A549 (cell line): ENCODE measurements at regions of chr15 and their contacts with region 1.

Region 1: GRCh38 chr15:74307827-74308644 is 59.4 kb downstream of the CYP11A1 start:
- DNase-seq: peak; percentile 61 to 83
- ATAC-seq: peak; percentile 88 to 94
- H3K4me3 ChIP-seq: no peak overlapping the region
- H3K27ac ChIP-seq: peak overlapping the region in 1 of 2 experiments; percentile 62; a peak in 2 of 6 replicates
- H3K4me1 ChIP-seq: peaks cover 18% of the 10 kb centered on the region
- CTCF ChIP-seq: peak; percentile 67
- EP300 ChIP-seq: no peak
- POLR2A ChIP-seq: no peak
- RAD21 ChIP-seq: peak; percentile 85 to 87

Region 2: DNA sequence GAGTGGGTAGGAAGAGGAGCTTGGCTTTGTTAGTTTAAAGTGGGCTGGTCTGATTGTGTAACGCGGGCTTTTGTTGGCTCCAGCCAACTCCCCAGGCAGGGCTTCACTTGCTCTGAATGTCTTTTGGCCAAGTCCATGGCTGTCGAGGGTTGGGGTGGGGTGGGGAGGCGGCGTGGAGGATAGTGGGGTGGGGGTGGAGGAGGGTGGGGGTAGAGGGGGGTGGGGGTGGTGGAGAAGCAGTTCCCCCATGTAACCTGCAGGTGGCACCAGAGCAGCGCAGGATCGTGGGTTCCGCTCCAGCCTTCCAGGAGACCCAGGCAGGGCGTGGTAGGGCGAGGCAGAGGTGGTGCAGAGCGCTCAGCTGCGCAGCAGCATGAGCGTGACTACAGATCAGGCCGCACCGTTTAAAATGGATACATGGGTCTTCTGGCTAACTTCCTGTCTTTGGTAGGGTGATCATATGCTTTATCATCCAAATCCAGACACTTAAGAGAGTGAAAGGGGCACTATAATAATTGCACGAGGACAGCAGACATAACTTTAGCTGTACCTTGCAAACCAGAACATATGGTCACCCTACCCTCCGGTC is 254.0 kb before region 1 on chr15:
- CTCF ChIA-PET with region 1: interaction called, 63 read pairs
- POLR2A ChIA-PET with region 1: no interaction called
- DNase-seq: peak; percentile 56 to 64
- ATAC-seq: peak; percentile 97
- H3K4me3 ChIP-seq: no peak overlapping the region
- H3K27ac ChIP-seq: peak overlapping the region; percentile 42 to 51; a peak in 2 of 6 replicates
- H3K4me1 ChIP-seq: peaks cover 19% of the 10 kb centered on the region; the same call in 2 of the 3 replicates
- CTCF ChIP-seq: peak; percentile 55
- EP300 ChIP-seq: no peak
- POLR2A ChIP-seq: no peak
- RAD21 ChIP-seq: peak; percentile 60 to 79

Region 3: GRCh38 chr15:74170486-74171226 is 137.4 kb before region 1 on chr15:
- CTCF ChIA-PET with region 1: interaction called, 13 read pairs
- POLR2A ChIA-PET with region 1: interaction called, 3 read pairs
- DNase-seq: no peak
- ATAC-seq: no peak
- H3K4me3 ChIP-seq: no peak overlapping the region
- H3K27ac ChIP-seq: peak overlapping the region in 1 of 2 experiments; percentile 57; a peak in 2 of 6 replicates
- H3K4me1 ChIP-seq: peaks cover 16% of the 10 kb centered on the region
- CTCF ChIP-seq: no peak
- EP300 ChIP-seq: no peak
- POLR2A ChIP-seq: no peak
- RAD21 ChIP-seq: no peak

Region 4: GRCh38 chr15:74202452-74203428 is 105.3 kb before region 1 on chr15 and contains the start of gene STRA6:
- CTCF ChIA-PET with region 1: interaction called, 33 read pairs
- POLR2A ChIA-PET with region 1: no interaction called
- DNase-seq: peak; percentile 75 to 85
- ATAC-seq: peak; percentile 82 to 83
- H3K4me3 ChIP-seq: peak within 1 kb of the TSS; percentile 51
- H3K27ac ChIP-seq: peak within 1 kb of the TSS; percentile 90 to 97
- H3K4me1 ChIP-seq: peaks cover 64% of the 10 kb centered on the region
- CTCF ChIP-seq: no peak
- EP300 ChIP-seq: no peak
- POLR2A ChIP-seq: peak; percentile 5; the same call in 1 of the 2 replicates
- RAD21 ChIP-seq: peak; percentile 37 to 39; a peak in 4 of 5 replicates
- polyA plus RNA-seq, gene STRA6: 35.0 and 49.8 TPM in 2 replicates

Region 5: DNA sequence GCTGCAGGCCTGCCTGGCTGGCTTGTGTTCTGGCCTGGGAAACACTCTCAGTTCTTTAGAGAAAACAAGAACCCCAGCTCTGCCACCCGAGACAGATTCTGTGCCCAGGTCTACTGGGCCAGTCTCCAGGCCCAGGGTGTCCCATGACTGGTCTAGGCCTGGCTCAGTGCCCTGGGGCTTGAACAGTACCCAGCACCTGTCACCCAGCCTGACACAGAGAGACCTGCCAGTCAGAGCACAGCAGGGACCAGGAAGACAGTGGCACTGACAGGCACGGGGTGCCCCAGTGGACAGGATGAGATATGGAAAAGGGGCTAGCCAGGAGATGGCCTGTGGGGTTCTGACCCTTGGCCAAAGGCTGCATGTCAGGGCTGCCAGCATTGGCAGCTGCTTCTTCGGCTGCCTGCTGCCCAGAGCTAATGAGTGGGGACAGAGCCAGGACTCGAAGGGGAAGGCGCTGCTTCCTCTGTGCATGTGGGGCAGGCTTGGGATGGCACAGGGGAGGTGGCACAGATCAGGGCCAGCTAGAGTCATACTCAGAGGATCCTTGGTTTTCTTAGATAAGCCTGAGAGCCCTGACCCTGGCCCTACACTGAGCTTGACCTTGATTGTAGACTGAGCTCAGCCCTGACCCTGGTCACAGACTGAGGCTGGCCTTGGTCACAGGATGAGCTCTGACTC is 56.8 kb before region 1 on chr15:
- CTCF ChIA-PET with region 1: interaction called, 10 read pairs
- POLR2A ChIA-PET with region 1: no interaction called
- DNase-seq: no peak
- ATAC-seq: peak; percentile 33 to 52; a peak in 3 of 6 replicates
- H3K4me3 ChIP-seq: no peak overlapping the region
- H3K27ac ChIP-seq: peak overlapping the region in 1 of 2 experiments; percentile 11; a peak in 1 of 6 replicates
- H3K4me1 ChIP-seq: peaks cover 4% of the 10 kb centered on the region; the same call in 1 of the 3 replicates
- CTCF ChIP-seq: no peak
- EP300 ChIP-seq: no peak
- POLR2A ChIP-seq: no peak
- RAD21 ChIP-seq: no peak

Region 6: DNA sequence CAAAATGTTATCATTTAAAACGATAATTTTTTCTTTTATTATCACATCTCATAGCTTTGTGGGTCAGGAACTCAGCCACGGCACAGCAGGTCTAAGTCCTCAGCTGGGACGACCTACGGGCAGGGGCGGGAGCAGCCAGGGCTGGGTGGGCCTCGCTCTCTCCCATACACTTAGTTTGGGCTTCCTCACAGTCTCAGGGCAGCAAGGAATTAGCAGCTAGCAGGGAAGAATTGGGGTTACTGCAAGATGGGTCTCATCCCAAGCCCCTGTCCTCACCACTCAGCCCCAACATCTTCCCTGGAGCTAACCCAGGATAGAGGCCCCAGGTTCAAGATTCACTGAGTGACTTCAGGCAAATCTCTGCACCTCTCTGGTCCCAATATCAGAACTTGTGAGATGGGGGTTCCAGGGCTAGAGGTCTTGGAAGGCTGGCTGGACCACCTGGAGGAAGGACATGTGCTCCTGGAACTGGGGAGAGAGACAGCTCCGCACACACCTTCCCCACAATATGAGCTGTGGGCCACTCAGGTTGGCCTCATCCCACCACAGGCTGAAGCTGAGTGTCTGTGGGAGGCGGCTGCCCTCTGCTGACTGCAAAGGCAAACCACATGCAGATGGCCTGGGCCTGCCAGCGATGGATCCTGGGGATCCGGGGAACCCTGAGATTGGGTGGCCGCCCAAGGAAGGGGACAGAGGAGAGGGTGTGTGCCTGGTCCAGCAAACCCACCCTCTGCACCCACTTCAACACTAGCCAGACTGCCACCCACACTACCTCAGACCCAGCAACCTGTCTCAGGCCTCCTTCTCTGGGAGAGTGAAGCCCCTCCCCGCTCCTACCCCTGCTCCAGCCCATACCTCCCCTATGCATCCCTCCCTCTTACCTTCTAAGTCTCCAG is 14.4 kb after region 1 on chr15:
- CTCF ChIA-PET with region 1: interaction called, 174 read pairs
- POLR2A ChIA-PET with region 1: no interaction called
- DNase-seq: peak; percentile 55 to 65
- ATAC-seq: peak; percentile 93 to 95
- H3K4me3 ChIP-seq: no peak overlapping the region
- H3K27ac ChIP-seq: no peak overlapping the region
- H3K4me1 ChIP-seq: peaks cover 11% of the 10 kb centered on the region
- CTCF ChIP-seq: peak; percentile 80
- EP300 ChIP-seq: no peak
- POLR2A ChIP-seq: no peak
- RAD21 ChIP-seq: peak; percentile 85 to 93